ENCODE measurements at regions of chr3 and their contacts with region 1.

Region 1: GRCh38 chr3:150414258-150414657 is 6.2 kb downstream of the TSC22D2 start:
- DNase-seq: peak; percentile 18 to 46
- H3K4me3 ChIP-seq: peak overlapping the region; percentile 69
- H3K27ac ChIP-seq: no peak overlapping the region
- H3K4me1 ChIP-seq: peaks cover 58% of the 10 kb centered on the region
- H3K27me3 ChIP-seq: no peaks in the 10 kb centered on the region
- CTCF ChIP-seq: no peak

Region 2: GRCh38 chr3:150449169-150449721 is 35.0 kb after region 1 on chr3:
- CTCF ChIA-PET with region 1: no interaction called
- POLR2A ChIA-PET with region 1: interaction called, 10 read pairs
- intact Hi-C with region 1: loop called (anchors 2 kb)
- DNase-seq: peak in 1 of 2 experiments; percentile 60
- H3K4me3 ChIP-seq: no peak overlapping the region
- H3K27ac ChIP-seq: 0 out of 2 replicates have a peak overlapping the region, but pooled peaks have one; percentile 25
- H3K4me1 ChIP-seq: peaks cover 52% of the 10 kb centered on the region
- H3K27me3 ChIP-seq: no peaks in the 10 kb centered on the region
- CTCF ChIP-seq: no peak

Region 3: DNA sequence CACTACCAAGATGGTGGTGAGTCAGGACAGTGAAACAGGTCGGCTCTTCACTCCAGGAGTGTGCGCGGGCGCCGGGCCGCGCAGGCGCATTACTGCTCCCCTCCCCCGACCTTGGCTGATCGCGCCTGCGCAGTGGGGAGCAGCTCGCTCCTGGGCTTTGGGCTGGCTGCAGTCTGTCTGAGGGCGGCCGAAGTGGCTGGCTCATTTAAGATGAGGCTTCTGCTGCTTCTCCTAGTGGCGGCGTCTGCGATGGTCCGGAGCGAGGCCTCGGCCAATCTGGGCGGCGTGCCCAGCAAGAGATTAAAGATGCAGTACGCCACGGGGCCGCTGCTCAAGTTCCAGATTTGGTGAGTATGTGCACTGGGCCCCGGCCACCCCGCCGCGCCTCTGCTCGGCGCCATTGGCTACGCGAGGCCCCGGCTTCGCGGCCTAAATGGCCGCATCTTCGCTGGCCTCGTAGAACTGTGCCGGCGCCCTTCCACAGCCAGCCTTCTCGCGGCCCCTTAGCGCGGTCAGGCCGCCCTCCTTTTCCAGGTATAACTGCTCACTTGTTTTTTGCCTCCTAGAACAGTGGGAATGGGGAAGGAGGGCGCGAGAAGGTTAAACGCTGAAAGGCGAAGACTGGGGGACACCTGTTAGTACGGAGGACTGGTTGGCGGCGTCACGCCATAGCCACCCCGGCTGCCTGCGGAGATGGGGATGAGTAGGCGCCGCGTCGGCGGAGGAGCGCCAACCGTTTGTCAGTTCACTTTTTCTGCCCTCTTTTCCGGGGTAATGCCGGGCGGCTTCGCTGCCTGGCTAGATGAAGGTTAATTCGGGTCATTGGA is 189.1 kb after region 1 on chr3 and contains the start of gene SELENOT:
- CTCF ChIA-PET with region 1: no interaction called
- POLR2A ChIA-PET with region 1: interaction called, 10 read pairs
- intact Hi-C with region 1: no loop called
- DNase-seq: peak; percentile 88 to 98
- H3K4me3 ChIP-seq: peak within 1 kb of the TSS; percentile 94
- H3K27ac ChIP-seq: peak within 1 kb of the TSS; percentile 93
- H3K4me1 ChIP-seq: peaks cover 53% of the 10 kb centered on the region
- H3K27me3 ChIP-seq: no peaks in the 10 kb centered on the region
- CTCF ChIP-seq: peak; percentile 31; the same call in 1 of the 2 replicates
- total RNA-seq, gene SELENOT: 59.5 and 84.1 TPM in 2 replicates